BJ (cell line): ENCODE measurements at regions of chr16 and their contacts with region 1.

Region 1: DNA sequence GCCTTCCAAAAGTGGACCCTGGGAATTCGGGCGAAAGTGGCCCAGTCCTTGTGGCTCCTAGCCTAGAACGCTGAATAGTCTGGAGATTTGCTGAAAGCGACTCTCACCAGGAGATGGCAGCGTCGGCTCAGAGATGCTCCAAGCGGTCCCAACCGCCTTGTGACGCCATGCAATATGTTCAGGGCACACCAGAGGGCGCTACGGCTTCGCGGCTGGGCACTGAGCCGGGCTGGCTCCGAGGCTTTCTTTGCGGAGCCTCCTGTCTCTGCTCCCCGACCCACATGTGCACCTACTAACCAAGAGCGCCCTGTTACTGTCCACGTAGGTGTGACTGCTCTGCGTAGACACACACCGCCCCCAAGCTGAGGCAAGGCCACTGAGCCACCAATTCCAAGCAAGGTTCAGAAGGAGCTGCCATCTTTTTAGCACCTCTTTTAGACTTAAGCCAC is 36.9 kb downstream of the SYCE1L start:
- DNase-seq: no peak
- H3K4me3 ChIP-seq: no peak overlapping the region
- H3K27me3 ChIP-seq: peaks cover 2% of the 10 kb centered on the region; the same call in 1 of the 2 replicates
- CTCF ChIP-seq: peak; percentile 100

Region 2: DNA sequence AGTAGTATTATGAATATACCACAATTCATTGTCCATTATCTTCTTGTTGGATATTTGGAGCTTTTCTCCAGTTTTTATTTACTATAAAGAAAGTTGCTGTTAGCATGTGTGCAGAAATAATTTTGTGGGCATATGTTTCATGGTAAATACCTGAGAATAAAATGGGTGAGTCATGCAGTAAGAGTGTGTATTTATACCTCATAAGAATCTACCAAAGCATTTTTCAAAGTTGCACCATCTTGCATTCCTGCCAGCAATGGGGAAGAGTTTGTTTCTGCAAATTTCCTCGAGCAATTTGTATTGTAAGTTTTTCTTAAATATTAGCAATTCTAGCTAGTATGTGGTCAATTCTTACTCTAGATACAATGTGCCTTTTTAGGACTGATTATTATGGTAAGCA is 53.0 kb before region 1 on chr16:
- CTCF ChIA-PET with region 1: no interaction called
- POLR2A ChIA-PET with region 1: no interaction called
- DNase-seq: no peak
- H3K4me3 ChIP-seq: no peak overlapping the region
- H3K27me3 ChIP-seq: no peaks in the 10 kb centered on the region
- CTCF ChIP-seq: no peak

Region 3: DNA sequence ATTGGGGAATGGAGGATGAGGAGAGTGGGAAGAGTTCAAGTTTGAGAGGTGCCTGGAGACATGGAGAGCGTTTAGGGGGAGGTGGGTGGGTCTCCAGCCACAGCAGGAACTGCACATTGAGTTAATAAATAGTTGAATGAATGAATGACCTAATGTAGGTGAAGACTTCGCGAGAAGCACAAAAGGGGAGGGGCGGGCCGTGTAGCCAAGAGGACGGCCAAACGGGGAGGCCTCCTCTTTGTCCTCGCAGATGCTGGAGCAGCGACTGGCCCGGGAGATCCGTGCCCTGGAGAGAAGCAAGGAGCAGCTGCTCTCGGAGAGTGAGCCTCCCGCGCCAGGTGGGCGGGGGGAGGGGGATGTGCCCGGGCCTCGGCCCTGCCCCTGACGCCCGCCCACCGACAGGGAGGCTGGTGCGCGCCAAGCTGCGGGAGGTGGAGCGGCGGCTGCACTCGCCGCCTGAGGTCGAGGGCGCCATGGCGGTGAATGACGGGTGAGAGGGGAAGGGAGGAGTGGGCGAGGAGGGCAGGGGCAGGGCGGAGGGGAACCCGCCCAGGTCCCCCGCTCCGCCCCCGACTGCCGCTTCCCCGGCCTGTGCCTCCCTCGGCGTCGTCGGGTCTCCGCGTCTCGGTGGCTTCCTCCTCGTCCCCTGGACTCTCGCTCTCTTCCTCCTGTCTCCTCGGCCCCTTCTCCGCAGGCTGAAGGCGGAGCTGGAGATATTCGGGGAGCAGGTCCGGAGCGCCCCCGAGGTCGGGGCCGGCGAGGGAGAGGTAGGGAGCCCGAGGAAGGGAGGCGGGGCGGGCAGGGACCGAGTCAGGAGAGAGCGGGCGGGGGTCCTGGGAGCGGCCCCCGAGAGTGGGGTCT is 24.0 kb before region 1 on chr16:
- CTCF ChIA-PET with region 1: no interaction called
- POLR2A ChIA-PET with region 1: no interaction called
- DNase-seq: no peak
- H3K4me3 ChIP-seq: peak overlapping the region; percentile 52
- H3K27me3 ChIP-seq: no peaks in the 10 kb centered on the region
- CTCF ChIP-seq: no peak

Region 4: DNA sequence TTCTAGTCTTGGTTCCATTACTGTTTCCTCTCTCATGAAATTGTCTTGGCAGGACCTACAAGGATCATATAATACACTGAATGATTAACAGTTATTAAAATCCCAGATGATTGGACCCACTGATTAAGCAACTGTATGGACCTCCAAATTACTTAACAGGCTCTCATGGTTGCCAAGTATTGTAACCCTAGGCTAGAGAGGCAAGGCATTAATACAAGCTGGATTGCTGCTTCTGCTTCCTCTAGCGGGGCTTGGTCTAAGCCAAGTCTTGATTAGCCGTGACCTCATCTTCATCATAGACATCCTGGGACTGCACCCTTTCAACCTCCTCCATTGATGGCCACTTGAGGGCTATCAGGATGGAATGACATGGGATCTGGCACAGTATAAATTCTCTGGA is 10.1 kb after region 1 on chr16:
- CTCF ChIA-PET with region 1: interaction called, 20 read pairs
- POLR2A ChIA-PET with region 1: no interaction called
- DNase-seq: no peak
- H3K4me3 ChIP-seq: no peak overlapping the region
- H3K27me3 ChIP-seq: no peaks in the 10 kb centered on the region
- CTCF ChIP-seq: no peak

Region 5: DNA sequence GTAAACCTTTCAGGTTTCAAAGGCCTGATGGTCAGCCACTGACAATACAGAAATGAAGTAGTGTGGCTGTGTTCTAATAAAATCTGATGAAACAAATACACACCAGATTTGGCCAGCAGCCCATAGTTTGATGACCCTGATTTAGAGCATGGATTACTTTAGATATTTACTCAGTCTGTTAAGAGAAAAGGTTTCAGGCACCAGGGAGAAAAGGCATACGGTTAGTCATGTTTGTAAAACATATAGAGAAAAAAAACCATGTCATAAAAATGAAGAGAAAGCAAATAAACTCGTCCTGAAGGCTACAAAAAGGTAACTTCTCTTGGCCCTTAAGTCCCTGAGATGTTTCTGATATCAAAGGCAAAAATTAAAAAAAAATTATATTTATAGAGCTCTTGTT is 86.7 kb after region 1 on chr16:
- CTCF ChIA-PET with region 1: no interaction called
- POLR2A ChIA-PET with region 1: no interaction called
- DNase-seq: no peak
- H3K4me3 ChIP-seq: no peak overlapping the region
- H3K27me3 ChIP-seq: peaks cover 1% of the 10 kb centered on the region; the same call in 1 of the 2 replicates
- CTCF ChIP-seq: no peak

Region 6: DNA sequence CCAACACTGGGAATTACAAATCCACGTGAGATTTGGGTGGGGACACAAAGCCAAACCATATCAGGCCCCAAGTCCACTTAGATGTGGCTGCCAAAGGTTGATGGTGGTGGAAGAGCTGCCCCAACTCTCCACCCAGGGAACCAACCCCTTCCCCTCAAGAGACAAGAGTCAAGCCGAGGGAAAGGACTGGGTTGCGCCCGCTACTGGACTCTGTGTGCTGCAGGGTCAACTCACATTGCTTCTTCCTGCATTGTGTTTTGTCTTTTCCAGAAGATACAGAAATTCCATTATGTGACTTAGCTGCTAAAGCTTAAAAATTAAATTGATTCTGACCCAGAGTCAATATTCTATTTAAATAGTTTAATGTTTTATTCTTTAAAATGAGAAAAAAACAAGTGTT is 140.3 kb after region 1 on chr16:
- CTCF ChIA-PET with region 1: interaction called, 11 read pairs
- POLR2A ChIA-PET with region 1: no interaction called
- DNase-seq: no peak
- H3K4me3 ChIP-seq: no peak overlapping the region
- H3K27me3 ChIP-seq: no peaks in the 10 kb centered on the region
- CTCF ChIP-seq: peak; percentile 38

Region 7: GRCh38 chr16:77569406-77569805 is 333.3 kb after region 1 on chr16:
- CTCF ChIA-PET with region 1: interaction called, 11 read pairs
- POLR2A ChIA-PET with region 1: no interaction called
- DNase-seq: no peak
- H3K4me3 ChIP-seq: no peak overlapping the region
- H3K27me3 ChIP-seq: no peaks in the 10 kb centered on the region
- CTCF ChIP-seq: no peak

Region 8: DNA sequence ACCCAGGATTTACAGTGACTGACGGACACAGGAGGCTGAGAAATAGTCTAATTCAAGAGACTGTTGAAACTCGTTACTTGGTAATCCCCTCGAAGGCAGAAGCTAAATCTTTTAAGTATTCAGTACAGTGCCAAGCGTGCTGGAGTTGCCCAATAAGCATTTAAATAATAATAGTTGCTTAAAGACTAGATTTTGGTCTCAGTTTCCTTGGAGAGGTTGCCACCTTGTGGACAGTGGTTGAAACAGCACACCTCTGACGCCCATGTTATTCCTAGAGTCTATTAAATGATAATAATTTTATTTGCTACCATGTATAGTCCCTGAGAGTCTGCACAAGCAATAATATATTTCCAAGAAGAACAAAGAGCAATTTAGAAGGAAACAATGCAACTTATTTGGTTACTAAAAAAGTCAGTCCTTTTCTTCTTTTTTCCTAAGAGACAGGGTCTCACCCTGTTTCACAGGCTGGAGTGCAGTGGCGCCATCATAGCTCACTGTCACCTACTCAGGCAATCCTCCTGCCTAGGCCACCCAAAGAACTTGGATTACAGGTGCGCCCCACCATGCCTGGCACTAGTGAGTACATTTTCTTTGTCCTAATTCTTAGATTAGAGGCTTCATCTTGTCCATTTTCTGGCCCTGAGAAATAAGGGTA is 348.2 kb after region 1 on chr16:
- CTCF ChIA-PET with region 1: interaction called, 302 read pairs
- POLR2A ChIA-PET with region 1: no interaction called
- DNase-seq: no peak
- H3K4me3 ChIP-seq: no peak overlapping the region
- H3K27me3 ChIP-seq: no peaks in the 10 kb centered on the region; the same call in 1 of the 2 replicates
- CTCF ChIP-seq: peak; percentile 80